Dendritic cell treated with granulocyte-macrophage colony-stimulating factor and Interleukin-4, amounts not matched to agents 40 ng/mL and 50 ng/mL, for 4 days (primary cell): ENCODE measurements at regions of chr1 and their contacts with region 1.

Region 1: GRCh38 chr1:86380257-86380861 is 15.8 kb downstream of the ODF2L start:
- H3K4me3 Mint-ChIP-seq: no peak overlapping the region
- H3K27ac Mint-ChIP-seq: no peak overlapping the region
- H3K4me1 Mint-ChIP-seq: no peaks in the 10 kb centered on the region
- H3K27me3 Mint-ChIP-seq: no peaks in the 10 kb centered on the region

Region 2: DNA sequence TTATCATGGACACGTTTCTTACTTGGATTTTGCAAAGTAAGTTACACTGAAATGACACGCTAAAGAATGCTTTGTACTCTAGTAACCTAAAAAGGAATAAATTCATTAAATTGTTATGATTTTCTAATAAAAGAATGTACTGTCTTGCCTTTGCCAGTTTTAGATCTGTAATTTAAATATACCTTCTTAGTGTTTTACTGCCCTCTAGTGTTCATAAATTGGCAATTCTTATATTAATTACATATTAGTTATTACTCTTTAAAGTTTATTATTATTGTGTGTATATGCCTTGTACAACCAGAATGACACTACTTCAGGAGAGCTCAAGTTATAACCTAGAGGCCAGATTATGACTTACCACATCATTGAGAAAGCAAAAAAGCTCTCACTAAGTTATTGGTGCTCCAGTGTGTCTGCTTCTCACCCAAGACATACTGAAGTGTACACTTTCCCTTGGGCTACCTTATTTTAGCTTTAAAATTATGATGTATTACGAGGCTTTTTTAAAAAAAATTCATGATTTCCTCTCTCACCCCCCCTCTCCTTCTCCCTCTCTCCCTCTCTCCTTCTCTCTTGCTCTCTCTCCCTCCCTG is 704.0 kb after region 1 on chr1:
- intact Hi-C with region 1: loop called (anchors 5 kb)
- H3K4me3 Mint-ChIP-seq: no peak overlapping the region
- H3K27ac Mint-ChIP-seq: no peak overlapping the region
- H3K4me1 Mint-ChIP-seq: no peaks in the 10 kb centered on the region
- H3K27me3 Mint-ChIP-seq: no peaks in the 10 kb centered on the region